BJ (cell line): ENCODE measurements at regions of chr16 and their contacts with region 1.

Region 1: DNA sequence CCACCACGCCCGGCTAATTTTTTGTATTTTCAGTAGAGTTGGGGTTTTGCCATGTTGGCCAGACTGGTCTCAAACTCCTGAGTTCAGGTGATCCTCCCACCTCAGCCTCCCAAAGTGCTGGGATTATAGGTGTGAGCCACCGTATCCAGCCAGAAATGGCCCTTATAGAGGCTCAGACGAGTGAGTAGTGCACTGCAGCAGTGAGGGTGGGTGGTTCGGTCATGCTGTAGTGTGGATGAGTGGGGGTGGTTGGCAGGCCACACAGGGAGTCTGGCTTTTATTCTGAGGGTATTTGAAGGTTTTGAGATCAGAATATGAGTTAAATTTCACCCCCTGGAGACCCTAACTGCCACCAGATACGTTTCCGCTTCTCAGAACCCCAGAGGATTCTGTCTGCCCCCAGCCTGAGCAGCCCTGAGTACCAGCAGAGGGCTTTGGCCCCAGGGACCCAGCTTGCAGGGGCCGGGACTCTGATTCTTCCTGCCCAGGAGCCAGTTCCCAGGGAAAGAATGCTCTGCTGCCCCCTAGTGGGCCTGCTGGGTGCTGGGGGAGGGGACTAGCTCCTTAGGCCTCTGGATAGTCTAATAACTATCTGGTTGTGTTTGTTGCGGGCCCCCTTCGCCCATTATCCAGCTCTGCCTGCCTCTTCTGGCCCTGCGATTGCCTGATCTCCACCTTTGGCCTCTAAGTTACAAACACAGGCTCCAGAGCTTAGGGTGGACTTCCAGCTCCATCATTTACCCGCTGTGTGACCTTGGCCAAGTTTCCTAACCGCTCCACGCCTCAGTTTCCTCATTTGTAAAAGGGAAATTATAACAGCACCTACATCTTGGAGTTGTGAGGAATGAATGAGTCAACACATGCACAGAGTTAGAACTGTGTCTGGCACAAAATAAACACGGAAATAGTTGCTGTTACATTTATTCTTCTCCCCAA is 2.0 kb downstream of the ZNF771 start:
- DNase-seq: peak; percentile 17
- H3K4me3 ChIP-seq: no peak overlapping the region
- H3K27me3 ChIP-seq: no peaks in the 10 kb centered on the region
- CTCF ChIP-seq: peak; percentile 98

Region 2: DNA sequence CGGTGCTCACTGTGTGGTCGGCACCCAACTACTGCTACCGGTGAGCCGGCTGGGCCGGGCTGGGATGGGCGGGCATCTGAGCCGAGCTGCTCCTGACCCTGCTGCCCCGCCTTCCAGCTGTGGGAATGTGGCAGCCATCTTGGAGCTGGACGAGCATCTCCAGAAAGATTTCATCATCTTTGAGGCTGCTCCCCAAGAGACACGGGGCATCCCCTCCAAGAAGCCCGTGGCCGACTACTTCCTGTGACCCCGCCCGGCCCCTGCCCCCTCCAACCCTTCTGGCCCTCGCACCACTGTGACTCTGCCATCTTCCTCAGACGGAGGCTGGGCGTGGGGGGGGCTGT is 324.6 kb before region 1 on chr16:
- CTCF ChIA-PET with region 1: no interaction called
- POLR2A ChIA-PET with region 1: no interaction called
- DNase-seq: no peak
- H3K4me3 ChIP-seq: no peak overlapping the region
- H3K27me3 ChIP-seq: no peaks in the 10 kb centered on the region
- CTCF ChIP-seq: no peak

Region 3: DNA sequence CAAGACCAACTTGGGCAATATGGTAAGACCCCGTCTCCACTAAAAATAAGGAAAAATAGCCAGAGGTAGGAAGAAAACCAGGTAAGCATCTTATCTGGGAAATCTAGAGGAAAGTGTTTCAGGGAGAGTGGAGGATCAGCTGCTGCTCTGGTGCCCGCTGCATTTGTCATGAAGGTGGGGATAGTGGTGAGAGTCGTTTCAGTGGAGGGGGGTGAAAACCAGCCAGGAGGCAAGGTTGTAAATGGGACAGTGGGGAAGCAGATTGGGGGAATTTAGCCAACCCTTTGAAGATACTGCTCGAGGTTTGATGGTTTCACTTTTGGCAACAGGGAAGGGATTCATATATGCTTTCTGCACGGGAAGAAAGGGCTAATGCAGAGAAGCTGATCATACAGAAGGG is 11.6 kb after region 1 on chr16:
- CTCF ChIA-PET with region 1: interaction called, 11 read pairs
- POLR2A ChIA-PET with region 1: interaction called, 3 read pairs
- DNase-seq: no peak
- H3K4me3 ChIP-seq: no peak overlapping the region
- H3K27me3 ChIP-seq: no peaks in the 10 kb centered on the region
- CTCF ChIP-seq: no peak